AG04449 (cell line): ENCODE measurements at regions of chr2 and their contacts with region 1.

Region 1: GRCh38 chr2:33380001-33380609 is 96.3 kb upstream of the RASGRP3 start:
- DNase-seq: no peak
- H3K4me3 ChIP-seq: no peak overlapping the region
- CTCF ChIP-seq: peak; percentile 19

Region 2: GRCh38 chr2:33342171-33342570 is 37.9 kb before region 1 on chr2:
- CTCF ChIA-PET with region 1: no interaction called
- POLR2A ChIA-PET with region 1: no interaction called
- DNase-seq: no peak
- H3K4me3 ChIP-seq: no peak overlapping the region
- CTCF ChIP-seq: no peak

Region 3: DNA sequence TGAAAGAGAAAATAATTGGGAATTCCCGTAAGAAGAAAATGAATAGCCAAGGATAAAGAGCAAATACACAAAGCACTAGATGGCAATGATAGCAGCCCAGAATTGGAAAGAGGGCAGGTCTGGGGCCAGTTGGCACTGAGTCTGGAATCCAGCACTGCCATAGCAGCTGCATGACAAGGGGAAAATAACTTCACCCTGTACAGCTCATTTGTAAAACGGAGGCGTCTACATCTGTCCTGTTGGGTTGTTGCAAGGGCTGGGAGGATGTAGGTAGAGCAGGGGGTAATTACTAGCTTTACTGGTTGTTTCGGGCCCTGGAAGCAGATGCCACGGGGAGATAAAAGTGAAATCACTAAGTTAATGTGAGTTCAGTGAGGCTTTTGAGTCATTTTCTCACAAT is 13.6 kb before region 1 on chr2:
- CTCF ChIA-PET with region 1: interaction called, 15 read pairs
- POLR2A ChIA-PET with region 1: no interaction called
- DNase-seq: no peak
- H3K4me3 ChIP-seq: no peak overlapping the region
- CTCF ChIP-seq: no peak

Region 4: DNA sequence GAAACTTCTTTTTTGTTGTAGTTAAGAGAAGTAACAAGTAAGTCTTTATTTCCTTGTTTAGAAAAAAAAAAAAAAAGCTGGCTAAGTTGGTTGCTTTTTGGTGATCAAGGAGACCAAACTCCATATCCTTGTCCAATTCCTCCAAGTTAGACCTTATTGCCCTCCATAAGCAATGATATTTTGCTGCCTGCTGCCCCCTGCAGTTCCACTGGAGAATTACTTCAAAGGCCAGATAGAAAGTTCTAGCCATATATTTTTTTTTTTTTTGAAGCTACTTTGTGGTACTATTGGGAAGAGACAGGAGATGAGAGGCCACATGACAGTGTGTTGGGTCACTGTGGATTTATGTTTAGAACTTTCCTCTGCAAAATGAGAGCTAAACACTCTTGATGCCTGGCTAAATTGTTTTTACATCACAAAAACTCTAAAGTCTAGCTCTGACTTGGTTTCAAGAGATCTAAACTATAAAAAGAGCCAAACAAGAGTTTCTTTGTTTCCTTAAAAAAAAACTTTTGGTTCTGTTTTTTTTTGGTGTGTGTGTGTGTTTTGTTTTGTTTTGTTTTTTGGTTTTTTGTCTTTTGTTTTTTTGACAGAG is 15.6 kb after region 1 on chr2:
- CTCF ChIA-PET with region 1: interaction called, 22 read pairs
- POLR2A ChIA-PET with region 1: no interaction called
- DNase-seq: no peak
- H3K4me3 ChIP-seq: no peak overlapping the region
- CTCF ChIP-seq: peak; percentile 52